ENCODE measurements at regions of chr1 and their contacts with region 1.

Region 1: GRCh38 chr1:27284425-27285273 is 37.3 kb upstream of the TMEM222 start:
- DNase-seq: peak; percentile 66 to 89 (median 77)
- H3K4me3 ChIP-seq: no peak overlapping the region
- H3K4me3 Mint-ChIP-seq: no peak overlapping the region
- H3K27ac ChIP-seq: no peak overlapping the region
- H3K27ac Mint-ChIP-seq: peak overlapping the region in 2 of 8 donors; percentile 20 to 34
- H3K4me1 ChIP-seq: no peaks in the 10 kb centered on the region
- H3K4me1 Mint-ChIP-seq: peaks cover 0 to 4% (median 0%) of the 10 kb centered on the region in 3 donors
- H3K27me3 ChIP-seq: no peaks in the 10 kb centered on the region
- H3K27me3 Mint-ChIP-seq: no peaks in the 10 kb centered on the region

Region 2: DNA sequence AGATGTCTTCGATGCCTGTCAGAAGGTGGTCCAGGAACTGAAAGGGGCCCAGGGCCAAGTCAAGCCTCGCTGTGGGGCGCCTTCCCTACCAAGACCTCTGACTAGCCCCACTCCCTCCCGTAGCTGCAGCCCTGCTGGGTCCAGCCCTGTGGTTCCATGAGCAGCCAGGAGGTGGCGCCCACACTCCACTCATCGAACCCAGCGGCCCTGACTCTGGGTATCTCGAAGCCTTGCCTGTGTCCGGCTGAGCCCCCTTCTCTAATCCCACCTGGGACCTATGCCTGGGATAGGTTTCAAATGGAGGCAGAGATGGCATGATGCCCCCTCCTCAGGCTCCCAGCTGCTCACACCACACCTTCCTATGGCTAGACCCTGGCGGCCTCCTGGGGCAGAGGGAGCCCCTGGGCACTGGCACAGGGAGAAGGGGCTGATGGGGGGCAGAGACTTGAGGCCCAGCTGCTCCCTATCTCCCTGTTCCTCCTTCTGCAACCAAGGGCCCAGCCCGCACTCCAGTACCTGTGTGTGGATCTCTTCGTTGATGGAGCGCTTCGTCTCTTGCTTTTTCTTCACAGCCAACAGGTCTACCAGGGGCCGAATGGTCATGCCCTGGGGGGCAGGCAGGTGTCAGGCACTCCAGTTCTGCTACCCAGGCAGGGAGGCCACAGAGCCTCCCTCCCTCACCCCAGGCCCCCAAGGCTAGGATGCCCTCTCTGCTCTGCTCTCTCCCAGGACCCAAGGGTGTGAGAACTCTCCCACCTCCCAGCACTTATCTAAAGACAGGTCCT is 181.8 kb before region 1 on chr1:
- CTCF ChIA-PET with region 1: interaction called, 85 read pairs
- POLR2A ChIA-PET with region 1: no interaction called
- DNase-seq: peak; percentile 61 to 79 (median 69)
- H3K4me3 ChIP-seq: no peak overlapping the region
- H3K4me3 Mint-ChIP-seq: no peak overlapping the region
- H3K27ac ChIP-seq: no peak overlapping the region
- H3K27ac Mint-ChIP-seq: peak overlapping the region in 3 of 8 donors; percentile 22 to 86 (median 38)
- H3K4me1 ChIP-seq: peaks cover 5% of the 10 kb centered on the region
- H3K4me1 Mint-ChIP-seq: peaks cover 0 to 3% (median 2%) of the 10 kb centered on the region in 3 donors
- H3K27me3 ChIP-seq: no peaks in the 10 kb centered on the region
- H3K27me3 Mint-ChIP-seq: no peaks in the 10 kb centered on the region

Region 3: DNA sequence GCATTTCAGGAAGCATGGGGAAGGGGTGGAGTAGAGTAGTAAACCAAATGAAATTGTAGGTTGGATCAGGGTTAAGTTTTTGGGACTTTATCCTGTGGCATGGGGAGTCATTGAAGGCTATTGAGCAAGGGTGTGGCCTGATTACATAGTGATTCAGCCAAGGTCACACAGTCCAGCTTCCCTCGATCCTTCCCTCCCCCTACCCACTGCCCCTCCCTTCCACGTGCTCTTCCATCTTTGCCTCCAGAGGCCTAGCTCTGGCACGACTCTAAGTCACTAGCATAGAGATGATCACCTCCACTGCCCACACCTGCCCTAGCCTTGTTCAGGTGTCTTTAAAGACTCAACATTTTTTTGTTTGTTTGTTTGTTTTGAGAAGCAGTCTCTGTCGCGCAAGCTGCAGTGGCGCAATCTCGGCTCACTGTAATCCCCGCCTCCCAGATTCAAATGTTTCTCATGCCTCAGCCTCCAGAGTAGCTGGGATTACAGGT is 92.6 kb before region 1 on chr1:
- CTCF ChIA-PET with region 1: interaction called, 16 read pairs
- POLR2A ChIA-PET with region 1: no interaction called
- DNase-seq: no peak
- H3K4me3 ChIP-seq: no peak overlapping the region
- H3K4me3 Mint-ChIP-seq: no peak overlapping the region
- H3K27ac ChIP-seq: no peak overlapping the region
- H3K27ac Mint-ChIP-seq: no peak overlapping the region
- H3K4me1 ChIP-seq: no peaks in the 10 kb centered on the region
- H3K4me1 Mint-ChIP-seq: no peaks in the 10 kb centered on the region
- H3K27me3 ChIP-seq: no peaks in the 10 kb centered on the region
- H3K27me3 Mint-ChIP-seq: peaks cover 3 to 4% of the 10 kb centered on the region in 2 donors

Measured in CD8-positive, alpha-beta memory T cell (primary cell).